ENCODE measurements at regions of chr3 and their contacts with region 1.

Region 1: DNA sequence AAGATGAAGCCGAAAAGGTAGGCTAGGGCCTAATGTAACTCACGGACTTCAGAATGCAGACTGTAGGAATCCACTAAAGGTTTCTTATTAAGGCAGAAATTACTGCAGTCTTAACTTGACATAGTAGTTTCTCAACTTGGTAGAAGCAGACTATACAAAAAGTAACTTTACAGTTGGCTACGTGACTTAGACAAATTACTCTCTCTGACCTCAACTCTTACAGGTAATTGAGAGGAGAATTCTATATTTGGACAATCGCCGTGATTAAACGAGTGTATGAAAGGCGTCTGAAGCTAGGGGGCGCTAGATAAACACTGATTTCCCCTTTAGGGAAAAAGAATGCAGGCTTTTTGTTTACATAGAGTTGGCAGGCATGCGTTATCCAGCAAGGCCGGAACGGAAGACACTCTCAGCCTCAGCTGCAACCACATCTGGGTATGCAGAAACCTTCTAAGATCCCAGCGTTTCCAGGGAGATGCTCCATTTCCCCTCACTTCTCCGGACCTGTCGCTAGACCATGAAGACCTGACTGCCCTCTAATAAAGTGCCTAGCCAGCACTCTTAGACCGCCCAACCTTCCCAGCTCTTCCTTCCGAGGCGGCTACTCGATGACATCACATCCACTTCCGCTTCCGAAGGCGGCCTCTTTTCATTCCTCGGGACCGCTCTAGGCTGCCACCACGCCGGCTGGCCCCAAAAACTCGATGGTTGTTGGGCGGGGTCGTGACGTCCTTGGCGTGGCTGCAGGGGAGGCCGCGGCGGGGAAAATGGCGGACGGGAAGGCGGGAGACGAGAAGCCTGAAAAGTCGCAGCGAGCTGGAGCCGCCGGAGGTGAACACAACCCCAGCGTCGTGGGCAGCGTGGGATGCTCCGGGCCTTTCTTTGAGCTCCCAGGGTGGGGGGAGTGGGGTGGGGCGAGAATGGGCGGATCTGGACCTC is at the start of gene PCNP:
- DNase-seq: peak; percentile 93
- CTCF ChIP-seq: peak; percentile 71

Region 2: DNA sequence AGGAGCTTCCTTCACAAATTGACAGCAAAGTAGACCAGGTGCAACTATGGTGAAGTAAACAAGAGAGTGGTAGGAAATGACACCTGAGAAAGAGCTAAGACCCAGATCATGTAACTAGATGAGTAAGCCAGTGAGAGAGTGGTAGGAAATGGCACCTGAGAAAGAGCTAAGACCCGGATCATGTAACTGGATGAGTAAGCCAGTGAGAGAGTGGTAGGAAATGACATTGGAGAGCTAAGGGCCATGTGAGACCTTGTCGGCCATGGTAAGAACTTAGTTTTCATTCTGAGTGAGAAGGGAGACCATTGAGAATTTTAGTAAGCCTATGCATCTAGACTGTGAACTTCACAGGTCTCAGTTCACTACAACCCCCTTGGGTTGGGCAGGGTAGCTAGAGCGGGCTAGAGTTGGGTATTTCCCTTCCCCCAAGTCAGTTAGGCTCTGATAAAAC is 55.3 kb before region 1 on chr3:
- CTCF ChIA-PET with region 1: interaction called, 18 read pairs
- POLR2A ChIA-PET with region 1: interaction called, 8 read pairs
- DNase-seq: peak; percentile 65
- CTCF ChIP-seq: no peak

Region 3: GRCh38 chr3:101561630-101562328 is 11.9 kb before region 1 on chr3 and contains the start of gene TRMT10C:
- CTCF ChIA-PET with region 1: interaction called, 39 read pairs
- POLR2A ChIA-PET with region 1: interaction called, 17 read pairs
- DNase-seq: peak; percentile 96
- CTCF ChIP-seq: no peak

Region 4: DNA sequence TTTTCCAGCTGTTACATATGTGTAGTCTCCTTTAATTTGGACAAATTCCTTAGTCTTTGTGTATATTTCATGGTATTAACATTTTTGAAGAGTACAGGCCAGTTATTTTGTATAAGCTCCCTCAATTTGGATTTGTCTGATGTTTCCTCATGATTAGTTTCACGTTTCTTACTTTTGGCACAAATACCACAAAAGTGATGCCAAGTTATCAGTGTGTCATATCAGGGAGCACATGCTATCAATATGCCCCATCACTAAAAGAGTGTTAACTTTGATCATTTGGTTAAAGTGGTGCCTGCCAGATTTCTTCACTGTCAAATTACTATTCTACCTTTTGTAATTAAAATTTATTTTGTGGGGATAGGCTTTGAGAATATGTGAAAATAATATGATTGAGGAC is 14.9 kb after region 1 on chr3:
- CTCF ChIA-PET with region 1: interaction called, 10 read pairs
- POLR2A ChIA-PET with region 1: no interaction called
- DNase-seq: no peak
- CTCF ChIP-seq: no peak

Region 5: DNA sequence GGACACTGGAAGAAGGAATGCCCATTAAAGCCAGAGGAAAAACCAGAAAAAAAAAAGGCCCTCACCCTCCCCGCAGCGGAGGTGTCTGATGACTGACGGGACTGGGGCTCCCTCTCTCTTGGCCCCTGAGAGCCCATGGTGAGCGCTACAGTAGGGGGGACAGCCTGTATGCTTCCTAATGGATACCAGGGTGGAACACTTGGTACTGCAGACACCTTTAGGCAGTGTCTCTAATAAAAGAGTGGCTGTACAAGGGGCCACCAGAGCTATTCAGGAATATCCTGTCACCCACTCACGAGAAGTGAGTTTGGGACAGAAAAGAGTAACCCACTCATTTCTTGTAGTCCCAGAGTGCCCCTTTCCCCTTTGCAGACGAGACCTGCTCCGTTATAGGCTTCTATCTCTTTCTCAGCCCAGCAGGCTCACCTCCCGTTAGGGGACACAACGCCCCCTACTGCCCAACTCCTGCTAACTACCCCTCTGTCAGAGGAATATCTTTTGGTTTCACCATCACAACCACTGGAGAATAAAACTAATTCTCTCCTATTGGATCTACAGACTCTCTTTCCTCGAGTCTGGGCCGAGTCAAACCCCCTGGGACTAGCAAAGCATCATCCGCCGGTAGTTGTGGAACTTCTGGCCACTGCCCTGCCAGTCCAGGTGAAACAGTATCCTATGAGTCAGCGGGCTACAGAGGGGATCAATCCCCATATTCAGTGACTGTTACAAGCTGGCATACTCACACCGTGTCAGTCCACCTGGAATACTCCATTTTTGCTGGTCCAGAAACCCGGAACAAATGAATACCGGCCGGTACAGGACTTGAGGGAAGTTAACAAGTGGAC is 62.5 kb after region 1 on chr3:
- CTCF ChIA-PET with region 1: interaction called, 10 read pairs
- POLR2A ChIA-PET with region 1: no interaction called
- DNase-seq: peak; percentile 69
- CTCF ChIP-seq: peak; percentile 66

Measured in GM10248 (cell line).